GM12878 (cell line): ENCODE measurements at regions of chr18 and their contacts with region 1.

Region 1: GRCh38 chr18:50194631-50195532 is at the start of gene MYO5B:
- DNase-seq: no peak
- ATAC-seq: peak; percentile 84
- H3K4me3 ChIP-seq: peak within 1 kb of the TSS; percentile 57; the same call in 1 of the 2 replicates
- H3K27ac ChIP-seq: no peak within 1 kb of the TSS
- H3K4me1 ChIP-seq: no peaks in the 10 kb centered on the region
- H3K27me3 ChIP-seq: peaks cover 6 to 10% of the 10 kb centered on the region in 2 experiments; a peak in 3 of 4 replicates
- CTCF ChIP-seq: peak; percentile 32 to 52 (median 39); a peak in 5 of 6 replicates
- EP300 ChIP-seq: no peak
- POLR2A ChIP-seq: no peak
- RAD21 ChIP-seq: peak; percentile 61
- polyA plus RNA-seq, gene MYO5B: 2.8 to 4.4 TPM

Region 2: GRCh38 chr18:49510393-49511115 is 684.3 kb before region 1 on chr18:
- CTCF ChIA-PET with region 1: interaction called, 5 read pairs
- POLR2A ChIA-PET with region 1: no interaction called
- RAD21 ChIA-PET with region 1: interaction called, 3 read pairs
- SMC1A ChIA-PET with region 1: no interaction called
- in situ Hi-C with region 1: no loop called
- intact Hi-C with region 1: loop called (anchors 10 kb)
- DNase-seq: no peak
- ATAC-seq: peak; percentile 92
- H3K4me3 ChIP-seq: no peak overlapping the region
- H3K27ac ChIP-seq: no peak overlapping the region
- H3K4me1 ChIP-seq: no peaks in the 10 kb centered on the region
- H3K27me3 ChIP-seq: no peaks in the 10 kb centered on the region
- CTCF ChIP-seq: peak; percentile 86 to 90 (median 87)
- EP300 ChIP-seq: no peak
- POLR2A ChIP-seq: no peak
- RAD21 ChIP-seq: peak; percentile 82

Region 3: DNA sequence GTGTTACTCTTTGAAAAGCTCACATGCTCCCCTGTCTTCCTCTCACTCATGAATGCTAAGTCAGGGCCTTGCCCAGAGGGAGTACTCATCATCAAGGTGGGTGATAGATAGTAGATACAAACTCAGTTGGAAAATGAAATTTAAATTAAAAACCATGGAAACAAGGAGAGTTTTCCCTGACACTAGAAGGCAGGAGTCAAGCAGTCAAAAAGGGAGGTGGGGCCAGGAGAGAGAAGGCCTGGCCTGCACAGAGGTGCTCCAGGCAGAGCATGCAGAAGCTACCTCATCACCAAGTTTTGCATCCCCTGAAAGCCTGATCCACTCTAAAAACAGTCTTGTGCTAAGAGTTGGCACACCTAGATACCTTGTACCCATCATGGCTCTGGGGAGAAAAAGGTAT is 143.6 kb before region 1 on chr18:
- CTCF ChIA-PET with region 1: interaction called, 15 read pairs
- POLR2A ChIA-PET with region 1: no interaction called
- RAD21 ChIA-PET with region 1: no interaction called
- SMC1A ChIA-PET with region 1: interaction called, 5 read pairs
- in situ Hi-C with region 1: no loop called
- intact Hi-C with region 1: no loop called
- DNase-seq: no peak
- ATAC-seq: peak; percentile 36; the same call in 2 of the 3 replicates
- H3K4me3 ChIP-seq: no peak overlapping the region
- H3K27ac ChIP-seq: no peak overlapping the region
- H3K4me1 ChIP-seq: no peaks in the 10 kb centered on the region
- H3K27me3 ChIP-seq: no peaks in the 10 kb centered on the region; a peak in 1 of 4 replicates
- CTCF ChIP-seq: peak in 1 of 3 experiments; percentile 28; a peak in 1 of 6 replicates
- EP300 ChIP-seq: no peak
- POLR2A ChIP-seq: no peak
- RAD21 ChIP-seq: peak; percentile 28; the same call in 1 of the 2 replicates

Region 4: DNA sequence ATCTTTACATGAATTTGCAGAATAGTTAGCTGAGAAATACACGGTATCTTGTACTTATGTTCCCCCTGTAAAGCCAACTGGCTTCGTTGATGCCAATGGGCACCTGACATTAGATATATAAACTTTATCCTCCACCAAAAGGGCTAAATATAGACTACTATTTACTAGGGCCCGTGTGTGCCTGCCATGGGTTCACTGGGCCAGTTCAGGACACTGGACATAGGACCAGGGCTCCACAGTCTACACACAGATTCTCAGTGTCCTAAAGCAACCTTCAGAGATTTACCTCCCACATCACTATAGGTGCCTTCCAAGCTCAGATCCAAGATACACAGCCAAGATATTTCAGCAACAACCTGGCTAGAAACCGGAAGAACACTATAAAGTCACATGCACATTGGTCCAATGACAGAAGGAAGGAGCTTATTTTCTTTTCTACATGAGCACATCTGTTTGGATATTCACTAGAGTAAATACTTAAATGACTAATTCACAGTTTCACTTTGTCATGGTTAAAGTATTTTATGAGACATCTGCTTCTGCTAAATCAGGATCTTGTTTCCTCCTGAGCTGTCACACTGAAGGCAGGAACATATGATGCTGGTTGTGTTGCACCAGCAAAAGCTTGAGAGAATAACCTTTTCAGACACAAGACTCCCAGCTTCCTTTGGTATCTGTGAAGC is 95.0 kb before region 1 on chr18:
- CTCF ChIA-PET with region 1: interaction called, 3 read pairs
- POLR2A ChIA-PET with region 1: no interaction called
- RAD21 ChIA-PET with region 1: interaction called, 18 read pairs
- SMC1A ChIA-PET with region 1: interaction called, 4 read pairs
- in situ Hi-C with region 1: no loop called
- intact Hi-C with region 1: loop called (anchors 5 kb)
- DNase-seq: peak; percentile 36
- ATAC-seq: peak; percentile 72
- H3K4me3 ChIP-seq: no peak overlapping the region
- H3K27ac ChIP-seq: no peak overlapping the region
- H3K4me1 ChIP-seq: peaks cover 6% of the 10 kb centered on the region
- H3K27me3 ChIP-seq: peaks cover 0 to 2% of the 10 kb centered on the region in 2 experiments; a peak in 2 of 4 replicates
- CTCF ChIP-seq: no peak
- EP300 ChIP-seq: peak; percentile 47 to 64; a peak in 2 of 4 replicates
- POLR2A ChIP-seq: no peak
- RAD21 ChIP-seq: no peak

Region 5: DNA sequence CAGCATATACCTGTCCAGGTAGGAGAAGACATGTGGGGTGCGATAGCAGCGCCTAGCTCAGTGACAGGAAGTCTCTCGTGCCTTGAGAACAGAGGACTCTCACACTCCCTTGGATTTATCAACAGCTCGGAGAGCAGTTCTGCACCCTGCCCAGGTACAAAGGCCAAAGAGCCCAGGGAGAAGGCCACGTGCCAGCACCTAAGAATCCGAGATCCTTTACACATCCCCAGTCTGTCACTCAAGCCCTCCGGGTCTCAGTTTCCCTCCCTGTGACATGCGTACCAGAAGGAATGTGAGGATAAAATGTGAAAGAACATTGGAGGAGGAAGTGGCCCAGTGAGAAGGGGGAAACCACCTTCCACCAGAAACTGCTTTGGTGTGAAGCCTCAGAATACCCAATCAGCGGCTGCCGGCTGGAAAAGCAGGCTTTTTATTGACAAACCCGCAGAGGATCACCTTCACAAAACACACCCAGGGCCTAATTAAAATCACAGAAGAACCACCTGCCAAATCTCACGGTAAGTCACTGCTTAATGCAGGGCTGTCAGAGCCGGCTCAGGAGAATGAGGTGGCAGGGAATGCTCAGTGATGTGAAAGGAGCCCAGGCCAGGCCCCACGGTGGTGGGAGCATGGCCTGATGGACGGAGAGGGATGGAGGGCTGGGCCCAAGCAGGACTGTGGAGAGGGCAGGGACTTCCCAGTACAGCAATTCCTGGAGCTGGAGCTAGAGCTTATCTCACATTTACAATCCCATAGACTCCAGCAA is 66.2 kb before region 1 on chr18:
- CTCF ChIA-PET with region 1: interaction called, 15 read pairs
- POLR2A ChIA-PET with region 1: interaction called, 17 read pairs
- RAD21 ChIA-PET with region 1: interaction called, 40 read pairs
- SMC1A ChIA-PET with region 1: interaction called, 107 read pairs
- in situ Hi-C with region 1: no loop called
- intact Hi-C with region 1: no loop called
- DNase-seq: no peak
- ATAC-seq: peak; percentile 74
- H3K4me3 ChIP-seq: no peak overlapping the region
- H3K27ac ChIP-seq: no peak overlapping the region
- H3K4me1 ChIP-seq: no peaks in the 10 kb centered on the region
- H3K27me3 ChIP-seq: no peaks in the 10 kb centered on the region
- CTCF ChIP-seq: no peak
- EP300 ChIP-seq: 0 out of 4 replicates have a peak, but pooled peaks of 1 of the 2 experiments have one; percentile 5
- POLR2A ChIP-seq: no peak
- RAD21 ChIP-seq: no peak

Region 6: GRCh38 chr18:50177294-50177992 is 17.4 kb before region 1 on chr18:
- CTCF ChIA-PET with region 1: interaction called, 6 read pairs
- POLR2A ChIA-PET with region 1: no interaction called
- RAD21 ChIA-PET with region 1: interaction called, 13 read pairs
- SMC1A ChIA-PET with region 1: interaction called, 12 read pairs
- in situ Hi-C with region 1: no loop called
- intact Hi-C with region 1: no loop called
- DNase-seq: no peak
- ATAC-seq: no peak
- H3K4me3 ChIP-seq: no peak overlapping the region
- H3K27ac ChIP-seq: no peak overlapping the region
- H3K4me1 ChIP-seq: no peaks in the 10 kb centered on the region
- H3K27me3 ChIP-seq: peaks cover 0 to 4% of the 10 kb centered on the region in 2 experiments; a peak in 1 of 4 replicates
- CTCF ChIP-seq: no peak
- EP300 ChIP-seq: no peak
- POLR2A ChIP-seq: no peak
- RAD21 ChIP-seq: no peak

Region 7: GRCh38 chr18:50836521-50836957 is 641.7 kb after region 1 on chr18:
- CTCF ChIA-PET with region 1: no interaction called
- POLR2A ChIA-PET with region 1: no interaction called
- RAD21 ChIA-PET with region 1: no interaction called
- SMC1A ChIA-PET with region 1: no interaction called
- in situ Hi-C with region 1: no loop called
- intact Hi-C with region 1: no loop called
- DNase-seq: peak; percentile 32
- ATAC-seq: peak; percentile 76
- H3K4me3 ChIP-seq: no peak overlapping the region
- H3K27ac ChIP-seq: no peak overlapping the region
- H3K4me1 ChIP-seq: peaks cover 24% of the 10 kb centered on the region
- H3K27me3 ChIP-seq: no peaks in the 10 kb centered on the region
- CTCF ChIP-seq: no peak
- EP300 ChIP-seq: no peak
- POLR2A ChIP-seq: no peak
- RAD21 ChIP-seq: no peak